A673 (cell line): ENCODE measurements at regions of chr16 and their contacts with region 1.

Region 1: DNA sequence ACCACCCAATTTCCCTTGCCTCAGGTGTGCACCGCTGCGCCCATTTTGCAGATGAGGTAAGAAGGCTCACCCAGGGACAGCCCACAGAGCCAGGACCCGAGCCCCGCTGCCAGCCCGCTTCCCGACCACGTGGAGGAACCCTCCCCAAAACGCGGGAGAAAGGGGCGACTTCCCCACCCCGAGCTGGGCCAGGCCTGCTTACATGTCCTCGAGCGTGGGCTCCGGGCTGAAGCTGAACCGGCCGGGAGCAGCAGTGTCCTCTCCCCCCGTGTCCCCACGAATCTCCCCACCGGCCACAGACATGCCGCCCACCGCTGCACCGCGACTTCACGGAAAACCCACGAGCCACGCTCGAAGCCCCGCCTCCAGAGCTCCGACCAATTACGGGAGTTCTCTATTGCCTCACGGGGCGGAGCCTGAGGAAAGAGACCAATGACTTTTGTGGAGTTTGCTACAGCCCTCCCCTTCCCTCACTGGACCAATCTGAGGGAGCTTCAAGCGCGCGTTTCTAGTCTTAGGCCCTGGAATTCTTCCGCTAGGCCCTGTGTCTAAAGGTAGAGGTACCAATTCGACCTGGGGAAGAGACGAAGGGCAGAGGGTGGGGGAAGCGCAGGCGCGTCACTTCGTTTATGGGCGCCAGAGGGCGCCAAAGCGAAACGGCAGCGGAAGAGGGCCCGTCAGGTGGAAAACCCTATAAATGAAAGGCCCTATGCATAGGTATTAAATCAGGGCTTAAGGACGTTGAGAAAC is at the start of gene DCTPP1:
- DNase-seq: peak; percentile 100
- H3K4me3 ChIP-seq: peak within 1 kb of the TSS; percentile 61
- H3K27ac ChIP-seq: peak within 1 kb of the TSS; percentile 47
- H3K4me1 ChIP-seq: peaks cover 10% of the 10 kb centered on the region
- H3K27me3 ChIP-seq: no peaks in the 10 kb centered on the region
- CTCF ChIP-seq: peak; percentile 91
- total RNA-seq, gene DCTPP1: 92.5 and 111 TPM in 2 replicates

Region 2: DNA sequence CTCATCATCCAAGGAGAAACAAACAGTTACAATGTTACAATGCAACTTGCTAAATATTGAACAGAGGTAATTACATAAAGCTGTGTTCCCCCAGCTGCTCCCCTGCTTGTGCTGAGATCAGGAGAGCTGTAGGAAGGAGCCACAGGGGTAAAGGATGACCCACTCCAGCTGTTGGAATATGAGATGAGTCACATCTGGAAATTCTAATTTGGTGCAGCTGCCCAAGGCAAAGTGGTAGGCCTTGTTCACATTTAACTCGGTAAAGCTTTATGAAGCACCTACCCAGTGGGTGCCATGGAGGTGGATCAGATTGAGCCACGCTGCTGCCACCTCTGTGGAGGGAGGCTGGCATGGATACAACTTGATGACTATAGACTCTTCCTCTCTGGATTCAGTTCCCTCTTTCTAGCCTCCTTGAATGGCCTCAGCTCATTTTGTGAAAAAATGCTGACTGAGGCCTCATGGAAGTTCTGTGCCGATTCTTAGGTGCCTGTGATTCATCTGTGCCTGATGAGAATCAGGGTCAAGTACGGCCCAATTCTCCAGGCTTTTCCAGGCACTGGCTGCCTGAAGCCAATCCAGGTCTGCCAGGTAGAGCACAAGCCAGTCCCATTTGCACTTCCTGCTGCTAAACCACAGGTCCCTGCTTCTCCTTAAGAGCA is 172.9 kb after region 1 on chr16:
- CTCF ChIA-PET with region 1: interaction called, 12 read pairs
- POLR2A ChIA-PET with region 1: no interaction called
- intact Hi-C with region 1: loop called (anchors 1 kb)
- DNase-seq: peak; percentile 34
- H3K4me3 ChIP-seq: no peak overlapping the region
- H3K27ac ChIP-seq: peak overlapping the region; percentile 58
- H3K4me1 ChIP-seq: no peaks in the 10 kb centered on the region
- H3K27me3 ChIP-seq: no peaks in the 10 kb centered on the region
- CTCF ChIP-seq: no peak

Region 3: GRCh38 chr16:30615358-30616091 is 185.7 kb after region 1 on chr16:
- CTCF ChIA-PET with region 1: interaction called, 18 read pairs
- POLR2A ChIA-PET with region 1: no interaction called
- intact Hi-C with region 1: loop called (anchors 1 kb)
- DNase-seq: peak; percentile 81
- H3K4me3 ChIP-seq: no peak overlapping the region
- H3K27ac ChIP-seq: no peak overlapping the region
- H3K4me1 ChIP-seq: no peaks in the 10 kb centered on the region
- H3K27me3 ChIP-seq: no peaks in the 10 kb centered on the region
- CTCF ChIP-seq: peak; percentile 93